BJ (cell line): ENCODE measurements at regions of chrX and their contacts with region 1.

Region 1: DNA sequence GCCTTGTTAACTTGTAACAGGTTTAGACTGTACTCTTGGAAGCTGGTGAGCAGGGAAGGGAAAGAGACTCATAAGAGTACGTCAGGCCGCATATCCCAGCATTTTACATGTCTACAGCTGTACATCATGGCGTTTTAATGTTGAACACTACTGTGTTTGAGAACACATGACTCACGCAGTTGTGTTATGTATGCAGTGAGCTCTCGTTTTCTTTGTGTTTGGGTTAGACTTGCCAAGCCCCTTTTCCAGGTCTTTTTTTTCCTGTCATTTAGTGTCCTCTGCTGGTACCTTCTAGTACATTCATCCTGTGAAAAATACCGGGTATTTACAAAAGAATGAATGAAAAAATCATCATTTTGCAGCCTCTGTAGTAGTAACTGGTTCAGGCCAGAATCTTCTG is 35.3 kb downstream of the SMS start:
- DNase-seq: no peak
- H3K4me3 ChIP-seq: no peak overlapping the region
- H3K27me3 ChIP-seq: no peaks in the 10 kb centered on the region
- CTCF ChIP-seq: peak; percentile 46

Region 2: DNA sequence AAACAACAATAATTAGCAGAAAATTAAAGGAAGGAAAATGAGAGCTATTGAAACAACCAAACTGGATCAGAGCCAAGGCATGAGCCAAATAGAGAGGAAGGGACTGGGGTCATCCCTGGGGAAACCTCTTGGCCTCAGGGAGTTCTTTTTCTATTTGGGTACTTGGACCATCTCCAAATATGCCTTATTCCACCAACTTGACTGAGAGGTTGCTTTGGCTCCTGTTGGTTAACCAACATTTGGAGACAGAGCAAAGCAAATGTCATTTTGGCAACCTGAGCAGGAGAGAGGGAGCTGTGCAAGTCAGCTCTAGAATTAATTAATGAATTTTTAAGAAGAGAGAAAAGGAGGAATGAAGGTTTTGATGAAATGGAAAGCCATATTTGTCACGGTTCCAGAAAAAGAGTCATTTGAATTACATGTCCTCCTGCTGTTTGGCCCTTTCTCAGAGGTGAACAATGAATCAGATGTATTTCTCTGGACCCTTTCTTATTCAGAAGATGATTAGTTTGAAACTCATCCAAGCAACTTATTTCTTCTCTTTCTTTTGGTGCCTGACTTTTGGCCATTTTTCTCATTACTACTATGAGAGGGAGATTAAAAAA is 482.5 kb before region 1 on chrX:
- CTCF ChIA-PET with region 1: no interaction called
- POLR2A ChIA-PET with region 1: no interaction called
- DNase-seq: no peak
- H3K4me3 ChIP-seq: no peak overlapping the region
- H3K27me3 ChIP-seq: no peaks in the 10 kb centered on the region
- CTCF ChIP-seq: no peak

Region 3: GRCh38 chrX:21839334-21840192 is 136.2 kb before region 1 on chrX and contains the start of gene MBTPS2:
- CTCF ChIA-PET with region 1: interaction called, 12 read pairs
- POLR2A ChIA-PET with region 1: no interaction called
- DNase-seq: peak; percentile 31
- H3K4me3 ChIP-seq: peak within 1 kb of the TSS; percentile 79
- H3K27me3 ChIP-seq: no peaks in the 10 kb centered on the region
- CTCF ChIP-seq: 0 out of 2 replicates have a peak, but pooled peaks have one; percentile 13
- polyA plus RNA-seq, gene MBTPS2: 14.6 and 27.3 TPM in 2 replicates

Region 4: GRCh38 chrX:21926527-21927278 is 49.1 kb before region 1 on chrX:
- CTCF ChIA-PET with region 1: no interaction called
- POLR2A ChIA-PET with region 1: interaction called, 14 read pairs
- DNase-seq: peak; percentile 80
- H3K4me3 ChIP-seq: no peak overlapping the region
- H3K27me3 ChIP-seq: no peaks in the 10 kb centered on the region
- CTCF ChIP-seq: no peak

Region 5: DNA sequence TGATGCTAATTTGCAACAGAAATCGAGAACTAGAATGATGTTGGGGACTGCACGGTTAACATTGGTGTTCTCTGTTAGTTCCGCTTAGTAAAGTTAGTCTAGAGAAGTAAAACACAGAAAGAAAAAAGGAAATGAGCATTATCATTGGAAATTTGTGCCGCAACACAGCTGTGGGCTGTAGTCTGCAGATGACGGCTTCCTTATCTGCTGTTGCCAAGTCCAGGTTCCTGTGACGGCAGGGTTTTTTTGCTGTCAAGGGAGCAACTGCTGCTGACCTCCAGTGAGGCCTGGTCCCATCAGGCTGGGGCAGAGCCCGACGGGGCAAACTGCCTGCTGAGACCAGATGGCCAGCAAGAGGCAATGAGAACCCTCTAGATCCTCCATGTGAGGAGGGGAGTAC is 17.5 kb after region 1 on chrX:
- CTCF ChIA-PET with region 1: no interaction called
- POLR2A ChIA-PET with region 1: no interaction called
- DNase-seq: no peak
- H3K4me3 ChIP-seq: no peak overlapping the region
- H3K27me3 ChIP-seq: no peaks in the 10 kb centered on the region
- CTCF ChIP-seq: no peak

Region 6: DNA sequence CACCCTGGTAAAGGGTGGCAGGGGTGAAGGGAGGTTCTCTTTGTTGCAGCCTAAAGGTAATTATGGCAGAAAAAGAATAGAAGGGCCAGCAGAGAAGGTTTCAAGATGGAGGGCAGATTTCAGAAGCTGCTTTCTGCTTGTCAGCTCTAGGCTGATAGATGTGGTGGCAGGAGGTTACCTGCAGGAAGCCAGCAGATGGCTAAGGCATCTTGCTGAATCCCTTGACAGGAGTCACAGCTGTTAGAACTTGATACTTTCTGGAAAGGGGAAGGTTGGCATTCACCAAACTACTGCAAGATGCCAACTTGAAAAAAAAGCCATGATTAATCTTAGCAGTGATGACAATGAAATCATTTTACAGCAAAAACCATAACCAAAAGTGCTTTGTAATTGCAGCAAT is 227.4 kb after region 1 on chrX:
- CTCF ChIA-PET with region 1: no interaction called
- POLR2A ChIA-PET with region 1: no interaction called
- DNase-seq: no peak
- H3K4me3 ChIP-seq: no peak overlapping the region
- H3K27me3 ChIP-seq: no peaks in the 10 kb centered on the region
- CTCF ChIP-seq: no peak

Region 7: GRCh38 chrX:22516893-22517292 is 541.1 kb after region 1 on chrX:
- CTCF ChIA-PET with region 1: no interaction called
- POLR2A ChIA-PET with region 1: no interaction called
- DNase-seq: no peak
- H3K4me3 ChIP-seq: no peak overlapping the region
- H3K27me3 ChIP-seq: no peaks in the 10 kb centered on the region
- CTCF ChIP-seq: no peak